AG04450 (cell line): ENCODE measurements at regions of chr1 and their contacts with region 1.

Region 1: GRCh38 chr1:32335790-32336590 is at the start of gene MARCKSL1:
- DNase-seq: no peak
- H3K4me3 ChIP-seq: peak within 1 kb of the TSS; percentile 85
- H3K27ac ChIP-seq: no peak within 1 kb of the TSS
- H3K27me3 ChIP-seq: no peaks in the 10 kb centered on the region
- CTCF ChIP-seq: no peak
- polyA plus RNA-seq, gene MARCKSL1: 196 and 200 TPM in 2 replicates

Region 2: DNA sequence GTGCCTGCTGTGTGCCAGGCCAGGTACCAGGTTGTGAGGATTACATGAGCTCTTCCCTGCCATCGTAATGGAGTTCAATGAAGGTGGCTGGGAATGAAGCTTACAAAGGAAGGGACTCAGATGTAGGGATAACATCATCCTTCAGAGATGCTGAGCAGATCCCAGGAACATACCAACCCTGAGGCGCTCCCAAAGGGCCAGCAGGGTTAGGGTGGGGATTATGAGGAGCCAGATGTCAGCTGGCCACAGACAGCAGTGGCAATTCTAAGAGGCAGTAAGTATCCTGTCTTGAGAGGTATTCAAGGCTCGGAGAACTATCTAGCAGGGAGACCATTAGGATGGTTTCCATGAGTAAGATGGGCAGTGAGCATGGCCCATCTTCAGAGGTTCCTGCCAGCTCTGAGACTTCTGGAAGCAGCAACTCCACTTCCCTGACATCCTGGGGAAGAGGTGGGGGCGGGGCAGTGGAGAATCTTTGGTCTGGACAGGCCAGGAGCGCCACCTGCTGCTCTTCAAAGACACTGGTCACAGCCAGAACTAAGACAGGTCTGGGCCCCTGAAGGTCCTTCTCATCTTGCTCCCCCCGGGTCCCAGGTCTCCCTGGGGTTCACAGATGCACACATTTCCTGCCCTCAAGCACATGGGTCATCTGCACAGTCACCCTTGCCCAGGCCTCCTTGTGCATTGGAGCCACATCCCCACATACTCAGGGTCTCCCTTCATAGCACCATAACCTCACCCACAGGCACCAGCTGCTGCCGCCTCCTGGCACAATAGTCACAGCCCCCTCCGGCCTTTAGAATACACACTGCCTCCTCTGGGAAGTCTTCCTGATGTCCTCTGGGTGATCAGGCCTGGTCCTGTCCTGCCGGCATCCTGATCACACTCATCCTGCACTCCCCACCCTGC is 1424.7 kb before region 1 on chr1:
- CTCF ChIA-PET with region 1: no interaction called
- POLR2A ChIA-PET with region 1: interaction called, 13 read pairs
- DNase-seq: peak; percentile 68
- H3K4me3 ChIP-seq: no peak overlapping the region
- H3K27ac ChIP-seq: no peak overlapping the region
- H3K27me3 ChIP-seq: no peaks in the 10 kb centered on the region
- CTCF ChIP-seq: peak; percentile 87

Region 3: DNA sequence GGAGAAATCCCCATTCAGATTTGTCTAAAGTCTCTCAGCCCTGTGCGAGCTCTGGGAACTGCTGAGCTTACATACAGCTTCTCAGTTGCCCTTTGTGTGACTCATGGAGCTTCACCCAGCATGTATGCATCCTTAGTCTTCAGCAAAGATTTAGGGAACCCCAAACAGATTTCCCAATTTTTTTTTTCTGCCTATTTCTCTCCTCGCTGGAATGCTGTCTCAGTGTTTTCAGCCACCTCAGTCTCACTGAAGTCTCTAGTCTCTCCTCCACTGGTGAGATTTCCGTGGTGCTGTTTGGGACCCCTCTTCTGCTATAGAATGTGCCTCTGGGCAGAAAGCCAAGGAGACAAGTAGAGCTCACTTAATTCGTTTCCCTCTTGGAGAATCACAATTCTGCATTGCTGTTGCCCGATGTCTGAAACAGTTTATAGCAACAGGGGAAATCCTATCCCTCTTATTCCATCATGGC is 184.6 kb before region 1 on chr1:
- CTCF ChIA-PET with region 1: no interaction called
- POLR2A ChIA-PET with region 1: no interaction called
- DNase-seq: peak; percentile 55
- H3K4me3 ChIP-seq: peak overlapping the region; percentile 18
- H3K27ac ChIP-seq: peak overlapping the region; percentile 55
- H3K27me3 ChIP-seq: no peaks in the 10 kb centered on the region
- CTCF ChIP-seq: no peak

Region 4: DNA sequence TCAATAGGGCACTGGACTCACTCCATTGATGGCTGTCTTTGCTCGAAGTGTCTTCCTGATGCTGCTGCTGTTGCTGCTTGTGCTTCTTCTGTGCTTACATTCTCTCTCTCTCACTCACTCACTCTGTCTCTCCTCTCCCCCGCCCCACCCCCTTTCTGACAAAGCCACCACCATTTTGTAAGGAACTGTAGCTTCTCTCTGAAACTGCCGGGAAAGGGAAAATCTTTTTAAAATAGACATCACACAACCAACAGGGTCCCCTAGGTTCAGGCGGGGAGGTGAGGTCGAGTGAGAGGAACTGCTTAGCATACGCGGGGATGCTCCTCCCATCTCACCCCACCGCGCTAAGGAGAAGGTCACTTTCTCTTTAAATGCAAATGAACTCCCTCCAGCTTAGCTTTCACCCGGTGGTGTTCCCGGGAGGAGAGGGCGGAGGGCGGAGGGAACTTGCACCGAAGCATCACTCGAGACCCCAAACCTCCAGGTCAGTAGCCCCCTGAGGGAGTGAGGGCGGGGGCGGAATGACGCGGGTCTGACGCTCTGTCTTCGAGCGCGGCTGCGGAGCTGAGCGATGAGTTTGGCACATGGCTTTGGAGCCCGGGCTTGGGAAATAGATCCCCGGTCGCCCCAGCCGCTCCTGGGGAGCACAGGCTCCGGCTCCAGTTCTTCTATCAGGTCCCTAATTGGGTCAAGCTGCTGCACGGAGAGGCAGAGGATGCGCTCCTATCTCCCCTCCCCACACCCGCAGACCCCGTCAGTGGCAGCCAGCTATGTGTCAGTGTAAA is 135.6 kb before region 1 on chr1 and contains the start of gene CCDC28B:
- CTCF ChIA-PET with region 1: no interaction called
- POLR2A ChIA-PET with region 1: interaction called, 17 read pairs
- DNase-seq: no peak
- H3K4me3 ChIP-seq: peak within 1 kb of the TSS; percentile 79
- H3K27ac ChIP-seq: peak within 1 kb of the TSS; percentile 96
- H3K27me3 ChIP-seq: no peaks in the 10 kb centered on the region
- CTCF ChIP-seq: no peak
- polyA plus RNA-seq, gene CCDC28B: 17.6 and 20.8 TPM in 2 replicates

Region 5: GRCh38 chr1:32240140-32240951 is 95.6 kb before region 1 on chr1:
- CTCF ChIA-PET with region 1: no interaction called
- POLR2A ChIA-PET with region 1: interaction called, 18 read pairs
- DNase-seq: no peak
- H3K4me3 ChIP-seq: peak overlapping the region; percentile 70
- H3K27ac ChIP-seq: peak overlapping the region; percentile 75
- H3K27me3 ChIP-seq: no peaks in the 10 kb centered on the region
- CTCF ChIP-seq: peak; percentile 27; the same call in 1 of the 2 replicates

Region 6: DNA sequence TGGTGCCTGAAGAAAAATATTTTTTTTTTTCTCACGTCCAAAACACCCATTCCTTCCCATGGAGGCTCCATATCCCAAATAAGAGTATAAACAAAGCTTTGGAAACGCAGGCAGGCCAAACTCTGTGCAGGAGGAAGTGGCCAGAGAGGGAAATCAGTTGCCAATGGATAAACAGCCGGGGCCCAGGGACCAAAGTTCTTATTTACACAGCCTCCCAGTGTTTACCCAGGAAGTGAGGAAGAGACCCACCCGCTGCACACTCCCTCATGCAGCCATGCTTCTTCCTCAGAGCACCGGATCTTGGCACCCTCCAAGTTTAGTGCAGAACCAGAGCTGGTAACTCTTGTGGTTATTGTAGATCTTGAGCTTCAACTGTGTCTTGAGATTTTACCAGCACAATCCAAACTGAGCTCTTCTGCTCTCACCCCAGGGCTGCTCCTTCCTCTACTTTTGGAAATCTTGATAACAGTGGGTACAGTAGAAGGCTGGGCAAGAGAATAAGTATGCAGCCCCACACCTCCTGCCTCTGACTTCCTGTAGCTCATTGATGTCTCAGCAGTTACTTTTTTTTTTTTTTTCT is 14.2 kb before region 1 on chr1:
- CTCF ChIA-PET with region 1: no interaction called
- POLR2A ChIA-PET with region 1: interaction called, 13 read pairs
- DNase-seq: no peak
- H3K4me3 ChIP-seq: no peak overlapping the region
- H3K27ac ChIP-seq: peak overlapping the region; percentile 0
- H3K27me3 ChIP-seq: no peaks in the 10 kb centered on the region
- CTCF ChIP-seq: no peak

Region 7: DNA sequence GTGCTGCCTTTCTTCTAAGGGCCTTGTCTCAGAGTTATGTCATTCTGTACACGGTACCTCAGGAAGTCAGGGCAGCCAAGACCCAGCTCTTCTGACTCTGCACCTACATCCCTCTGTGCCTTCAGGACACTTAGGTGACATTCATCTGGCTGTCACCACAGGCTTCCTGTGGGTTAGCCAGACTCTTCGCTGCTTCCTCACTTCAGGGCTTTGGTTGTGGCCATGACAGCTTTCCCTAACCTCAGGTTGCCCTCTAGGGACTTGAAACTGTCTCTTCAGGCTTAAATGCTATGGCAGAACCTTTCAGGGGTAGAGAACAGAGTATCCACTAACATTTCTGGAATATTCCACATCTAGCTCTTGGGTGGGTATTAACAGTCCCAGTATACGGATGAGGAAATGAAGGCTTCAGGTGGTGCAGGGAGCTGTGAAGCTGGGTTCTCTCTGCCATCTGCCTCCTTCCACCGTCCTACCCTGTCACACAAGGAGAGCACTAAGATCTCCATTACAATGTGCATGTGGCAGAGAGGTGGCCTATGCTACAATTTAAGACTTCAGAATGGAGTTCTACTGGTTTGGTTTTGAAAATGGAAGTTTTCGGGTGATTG is 36.3 kb after region 1 on chr1:
- CTCF ChIA-PET with region 1: no interaction called
- POLR2A ChIA-PET with region 1: interaction called, 30 read pairs
- DNase-seq: no peak
- H3K4me3 ChIP-seq: no peak overlapping the region
- H3K27ac ChIP-seq: no peak overlapping the region
- H3K27me3 ChIP-seq: no peaks in the 10 kb centered on the region
- CTCF ChIP-seq: no peak

Region 8: DNA sequence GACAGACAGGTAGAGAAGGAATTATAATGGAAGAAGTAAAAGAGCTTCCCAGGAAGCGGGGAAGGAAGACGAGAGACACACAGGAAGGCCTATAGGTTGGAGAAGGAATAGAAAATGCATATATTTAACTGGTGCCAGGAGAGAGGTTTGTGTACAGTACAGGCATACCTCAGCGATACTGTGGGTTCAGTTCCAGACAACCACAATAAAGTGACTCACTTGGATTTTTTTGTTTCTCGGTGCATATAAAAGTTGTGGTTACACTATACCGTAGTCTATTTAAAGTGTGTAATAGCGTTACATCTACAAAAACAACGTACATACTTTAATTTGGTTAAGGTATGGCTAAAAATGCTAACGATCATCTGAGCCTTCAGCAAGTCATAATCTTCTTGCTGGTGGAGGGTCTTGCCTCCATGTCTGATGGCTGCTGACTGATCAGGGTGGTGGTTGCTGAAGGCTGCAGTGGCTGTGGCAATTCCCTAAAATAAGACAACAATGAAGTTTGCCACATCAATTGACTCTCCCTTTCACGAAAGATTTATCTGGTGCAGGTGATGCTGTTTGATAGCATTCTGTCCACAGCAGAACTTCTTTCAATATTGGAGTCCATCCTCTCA is 465.2 kb after region 1 on chr1:
- CTCF ChIA-PET with region 1: interaction called, 10 read pairs
- POLR2A ChIA-PET with region 1: no interaction called
- DNase-seq: peak; percentile 63
- H3K4me3 ChIP-seq: no peak overlapping the region
- H3K27ac ChIP-seq: peak overlapping the region; percentile 66
- H3K27me3 ChIP-seq: no peaks in the 10 kb centered on the region
- CTCF ChIP-seq: no peak